ENCODE measurements at regions of chr14 and their contacts with region 1.

Region 1: GRCh38 chr14:64891839-64892375 is 12.2 kb upstream of the SPTB start:
- DNase-seq: peak; percentile 55 to 57
- H3K4me3 ChIP-seq: no peak overlapping the region
- H3K4me1 ChIP-seq: no peaks in the 10 kb centered on the region
- H3K27me3 ChIP-seq: peaks cover 24% of the 10 kb centered on the region

Region 2: DNA sequence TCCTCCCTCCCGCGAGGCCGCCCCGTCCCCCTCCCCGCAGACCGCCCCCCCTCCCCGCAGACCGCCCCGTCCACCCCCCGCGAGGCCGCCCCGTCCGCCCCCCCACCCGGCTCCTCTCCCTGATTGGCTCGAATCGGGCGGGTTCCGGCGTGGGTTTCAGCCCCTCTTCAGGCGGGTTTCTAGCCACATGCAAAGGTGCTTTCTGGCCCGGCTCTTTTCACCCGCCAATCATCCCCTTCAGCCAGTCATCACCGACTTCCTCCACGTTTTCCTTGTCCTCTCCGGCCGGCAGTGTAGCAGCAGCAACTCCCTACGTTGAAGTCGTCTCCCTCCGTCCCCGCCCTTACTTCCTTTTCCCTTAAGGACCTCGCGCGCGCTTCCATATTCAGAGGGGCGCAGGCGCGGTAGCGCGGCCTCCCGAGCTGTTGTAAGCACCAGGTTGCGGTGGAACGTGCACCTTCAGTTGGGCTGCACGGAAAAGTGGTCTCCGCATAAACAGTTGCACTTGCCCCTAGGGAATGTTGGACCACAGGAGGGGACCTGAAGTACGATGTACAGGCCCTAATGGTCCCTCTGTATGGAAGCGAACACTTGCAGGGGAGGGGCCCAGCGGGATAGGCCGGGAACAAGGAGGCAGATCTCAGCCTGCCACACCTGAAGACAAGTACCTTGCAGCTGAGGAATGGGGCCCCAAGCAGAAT is 553.1 kb before region 1 on chr14:
- in situ Hi-C with region 1: loop called (anchors 25 kb)
- DNase-seq: peak; percentile 97 to 100
- H3K4me3 ChIP-seq: peak overlapping the region; percentile 60
- H3K4me1 ChIP-seq: peaks cover 9% of the 10 kb centered on the region
- H3K27me3 ChIP-seq: no peaks in the 10 kb centered on the region

Region 3: DNA sequence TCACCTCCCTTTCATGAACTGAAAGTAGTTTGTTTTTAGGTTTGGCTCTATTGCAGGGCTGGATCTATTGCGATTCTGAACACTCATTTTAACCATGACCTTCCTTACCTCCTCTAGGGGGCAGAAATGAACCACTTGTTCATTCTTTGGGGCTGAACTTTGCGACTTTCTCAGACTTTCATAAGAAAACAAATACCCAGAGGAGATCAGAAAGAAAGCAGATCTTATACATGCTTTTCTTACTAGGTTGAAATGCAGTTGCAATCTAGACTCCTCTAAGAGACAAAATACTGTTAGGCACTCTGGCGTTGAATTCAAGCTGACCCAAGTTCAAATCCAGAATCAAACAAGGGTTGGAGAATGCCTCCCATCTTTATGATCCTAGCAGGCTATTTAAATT is 220.3 kb before region 1 on chr14:
- in situ Hi-C with region 1: loop called (anchors 10 kb)
- DNase-seq: peak in 1 of 2 experiments; percentile 74
- H3K4me3 ChIP-seq: no peak overlapping the region
- H3K4me1 ChIP-seq: no peaks in the 10 kb centered on the region
- H3K27me3 ChIP-seq: no peaks in the 10 kb centered on the region

Region 4: GRCh38 chr14:64745511-64746091 is 146.3 kb before region 1 on chr14:
- in situ Hi-C with region 1: no loop called
- DNase-seq: no peak
- H3K4me3 ChIP-seq: no peak overlapping the region
- H3K4me1 ChIP-seq: no peaks in the 10 kb centered on the region
- H3K27me3 ChIP-seq: no peaks in the 10 kb centered on the region

Region 5: DNA sequence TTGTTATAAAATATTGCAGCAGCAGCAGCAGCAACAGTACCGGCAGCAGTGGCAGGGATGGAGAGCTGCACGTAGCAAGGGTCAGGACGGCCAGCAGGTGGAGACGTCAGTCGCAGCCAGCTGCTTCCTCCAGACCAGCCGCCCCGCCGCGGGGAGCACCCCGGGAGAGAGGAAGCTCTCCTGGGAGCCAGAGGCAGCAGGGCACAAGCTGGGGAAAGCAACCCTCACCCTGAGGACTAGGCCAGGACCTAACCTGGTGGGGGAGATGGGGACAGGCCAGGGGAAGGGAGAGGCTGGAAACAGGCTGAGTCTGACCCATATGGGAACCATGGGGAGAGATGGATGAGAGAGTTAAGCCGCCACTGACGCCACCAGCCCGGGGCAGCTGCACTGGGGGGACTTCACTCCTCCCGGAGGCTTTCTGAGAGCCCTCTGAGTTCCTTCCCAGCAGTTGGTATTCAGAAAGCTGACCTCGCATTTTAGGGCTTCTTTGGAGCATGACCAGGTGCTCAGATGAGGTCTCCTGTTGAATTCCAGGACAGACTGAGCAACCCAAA is 68.5 kb before region 1 on chr14:
- in situ Hi-C with region 1: loop called (anchors 5 kb)
- DNase-seq: peak; percentile 66 to 87
- H3K4me3 ChIP-seq: no peak overlapping the region
- H3K4me1 ChIP-seq: no peaks in the 10 kb centered on the region
- H3K27me3 ChIP-seq: no peaks in the 10 kb centered on the region

Region 6: GRCh38 chr14:64986578-64987571 is 95.0 kb after region 1 on chr14 and contains the start of gene FNTB:
- in situ Hi-C with region 1: no loop called
- DNase-seq: peak; percentile 95
- H3K4me3 ChIP-seq: peak within 1 kb of the TSS; percentile 61
- H3K4me1 ChIP-seq: peaks cover 11% of the 10 kb centered on the region
- H3K27me3 ChIP-seq: no peaks in the 10 kb centered on the region

Region 7: DNA sequence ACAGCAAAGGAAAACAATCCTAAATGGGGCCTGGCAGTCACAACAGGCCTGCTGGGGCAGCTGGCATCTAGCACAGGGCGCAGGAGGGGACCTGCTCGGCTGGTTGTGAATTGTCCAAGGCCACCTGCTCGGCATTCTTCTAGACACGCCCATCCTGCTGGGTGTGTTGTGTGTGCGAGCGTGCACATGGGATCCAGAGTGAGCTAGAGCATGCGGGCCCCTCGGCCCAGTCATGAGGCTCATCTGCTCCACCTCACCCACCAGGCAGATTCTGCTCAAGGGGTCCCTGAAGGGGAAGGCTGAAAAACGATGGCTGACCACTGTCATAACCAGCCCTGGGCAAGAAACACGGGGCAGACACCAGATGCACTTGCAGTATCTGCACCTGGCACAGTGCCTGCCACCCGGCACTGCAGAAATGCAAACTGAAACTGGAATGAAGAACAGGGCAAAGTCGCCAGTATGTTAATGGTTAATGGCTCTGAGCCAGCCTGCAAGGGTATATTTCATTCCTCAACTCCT is 178.6 kb after region 1 on chr14:
- in situ Hi-C with region 1: no loop called
- DNase-seq: no peak
- H3K4me3 ChIP-seq: no peak overlapping the region
- H3K4me1 ChIP-seq: no peaks in the 10 kb centered on the region
- H3K27me3 ChIP-seq: no peaks in the 10 kb centered on the region

Region 8: GRCh38 chr14:65446159-65446558 is 554.3 kb after region 1 on chr14:
- in situ Hi-C with region 1: no loop called
- DNase-seq: no peak
- H3K4me3 ChIP-seq: no peak overlapping the region
- H3K4me1 ChIP-seq: peaks cover 2% of the 10 kb centered on the region; the same call in 1 of the 2 replicates
- H3K27me3 ChIP-seq: no peaks in the 10 kb centered on the region